AG04450 (cell line): ENCODE measurements at regions of chr9 and their contacts with region 1.

Region 1: GRCh38 chr9:110464321-110464720 is 115.2 kb downstream of the SVEP1 start:
- DNase-seq: no peak
- H3K4me3 ChIP-seq: no peak overlapping the region
- H3K27ac ChIP-seq: no peak overlapping the region
- H3K27me3 ChIP-seq: no peaks in the 10 kb centered on the region
- CTCF ChIP-seq: no peak

Region 2: DNA sequence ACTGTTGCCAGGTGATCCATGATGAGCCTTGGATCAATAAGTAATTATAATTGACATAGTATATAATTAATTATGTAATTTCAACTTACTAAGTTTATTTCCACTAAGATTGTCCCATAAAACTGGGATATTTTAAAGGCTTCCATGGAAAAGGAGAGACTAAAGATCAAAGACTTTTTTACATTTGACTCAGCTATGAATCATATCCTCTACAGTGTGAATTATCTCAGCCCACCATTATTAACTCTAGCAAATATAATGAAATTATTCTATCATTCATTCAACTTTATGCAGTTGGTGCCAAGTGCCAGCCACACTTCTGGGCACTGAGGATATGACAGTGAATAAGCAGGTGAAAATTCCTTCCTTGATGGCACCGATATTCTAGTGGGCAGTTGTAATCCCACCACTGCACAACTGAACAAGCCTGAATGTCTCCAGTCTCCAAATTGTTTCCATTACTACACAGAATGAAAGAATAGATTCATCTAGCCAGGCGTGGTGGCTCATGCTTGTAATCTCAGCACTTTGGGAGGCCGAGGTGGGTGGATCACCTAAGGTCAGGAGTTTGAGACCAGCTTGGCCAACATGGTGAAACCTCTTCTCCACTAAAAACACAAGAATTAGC is 186.1 kb before region 1 on chr9:
- CTCF ChIA-PET with region 1: no interaction called
- POLR2A ChIA-PET with region 1: no interaction called
- DNase-seq: no peak
- H3K4me3 ChIP-seq: no peak overlapping the region
- H3K27ac ChIP-seq: no peak overlapping the region
- H3K27me3 ChIP-seq: peaks cover 5% of the 10 kb centered on the region
- CTCF ChIP-seq: no peak

Region 3: GRCh38 chr9:110426052-110426709 is 38.1 kb before region 1 on chr9:
- CTCF ChIA-PET with region 1: interaction called, 10 read pairs
- POLR2A ChIA-PET with region 1: no interaction called
- DNase-seq: no peak
- H3K4me3 ChIP-seq: no peak overlapping the region
- H3K27ac ChIP-seq: no peak overlapping the region
- H3K27me3 ChIP-seq: no peaks in the 10 kb centered on the region
- CTCF ChIP-seq: peak; percentile 53